ENCODE measurements at regions of chr3 and their contacts with region 1.

Region 1: DNA sequence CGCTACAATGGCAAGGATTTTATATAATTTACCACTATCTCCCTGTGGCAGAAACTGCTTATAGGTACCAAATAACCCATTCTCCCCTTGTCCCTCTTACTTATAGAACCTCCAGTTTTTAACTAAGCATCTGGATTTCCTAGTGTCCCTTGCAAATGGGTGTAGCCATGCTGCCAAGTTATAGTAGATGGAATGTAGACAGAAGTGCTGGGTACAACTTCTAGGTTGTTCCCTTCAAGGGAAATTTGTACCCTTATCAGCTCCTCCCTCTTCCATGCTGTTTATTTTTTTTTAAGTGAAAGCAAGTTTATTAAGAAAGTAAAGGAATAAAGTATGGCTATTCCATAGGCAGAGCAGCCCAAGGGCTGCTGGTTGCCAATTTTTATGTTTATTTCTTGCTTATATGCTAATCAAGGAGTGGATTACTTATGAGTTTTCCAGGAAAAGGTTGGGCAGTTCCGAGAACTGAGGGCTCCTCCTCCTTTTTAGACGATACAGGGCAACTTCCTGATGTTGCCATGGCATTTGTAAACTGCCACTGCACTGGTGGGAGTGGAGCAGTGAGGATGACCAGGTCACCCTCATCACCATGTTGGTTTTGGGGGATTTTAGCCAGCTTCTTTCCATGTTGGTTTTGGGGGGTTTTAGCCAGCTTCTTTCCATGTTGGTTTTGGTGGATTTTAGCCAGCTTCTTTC is 40.1 kb upstream of the TM4SF19 start:
- DNase-seq: peak in 1 of 2 experiments; percentile 10
- H3K4me3 ChIP-seq: no peak overlapping the region
- H3K27ac ChIP-seq: no peak overlapping the region
- H3K4me1 ChIP-seq: no peaks in the 10 kb centered on the region
- H3K27me3 ChIP-seq: no peaks in the 10 kb centered on the region
- CTCF ChIP-seq: no peak

Region 2: DNA sequence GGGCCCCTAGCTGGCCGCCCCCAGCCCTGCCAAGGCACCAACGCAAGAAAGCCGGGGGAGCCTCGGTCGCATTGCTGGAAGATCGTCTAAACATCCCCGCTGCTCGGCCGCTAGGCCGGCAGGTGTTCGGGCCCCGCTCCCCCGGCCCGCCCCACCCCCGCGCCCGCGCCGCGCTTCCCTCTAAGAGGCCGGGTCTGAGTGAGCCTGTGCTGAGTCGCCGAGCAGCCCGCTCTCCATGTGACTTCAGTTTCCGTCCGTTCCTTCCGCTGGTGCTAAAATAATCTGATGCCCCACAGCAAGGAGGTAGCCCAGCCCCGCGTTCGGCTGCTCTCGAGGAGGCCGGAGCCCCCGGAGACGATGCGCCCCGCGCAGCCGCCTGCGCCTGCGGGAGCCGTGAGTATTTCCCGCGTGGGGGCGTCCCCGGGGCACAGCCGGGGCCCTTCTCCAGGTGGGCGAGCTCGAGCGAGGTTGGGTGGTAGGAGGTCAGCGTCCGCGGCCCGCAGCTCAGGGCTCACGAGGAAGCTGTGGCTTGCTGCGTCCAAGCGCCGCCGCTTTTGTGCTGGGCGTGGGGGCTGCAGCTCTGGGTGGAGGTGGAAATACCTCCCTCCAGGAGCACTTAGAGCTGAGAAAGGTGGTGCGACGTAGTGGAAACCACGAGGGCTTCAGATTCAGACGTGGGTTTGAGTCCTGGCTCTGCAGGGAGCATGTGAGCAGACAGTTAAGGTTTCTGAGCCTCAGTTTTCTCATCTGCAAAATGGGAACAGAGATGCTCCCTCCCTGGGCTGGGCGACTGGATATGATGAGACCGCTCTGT is 261.4 kb after region 1 on chr3 and contains the start of gene NRROS:
- CTCF ChIA-PET with region 1: interaction called, 10 read pairs
- POLR2A ChIA-PET with region 1: no interaction called
- intact Hi-C with region 1: no loop called
- DNase-seq: peak; percentile 43 to 60
- H3K4me3 ChIP-seq: peak within 1 kb of the TSS; percentile 66
- H3K27ac ChIP-seq: no peak within 1 kb of the TSS
- H3K4me1 ChIP-seq: no peaks in the 10 kb centered on the region; the same call in 1 of the 2 replicates
- H3K27me3 ChIP-seq: peaks cover 20% of the 10 kb centered on the region
- CTCF ChIP-seq: no peak
- total RNA-seq, gene NRROS: 2.2 and 3.1 TPM in 2 replicates